Astrocyte of the cerebellum (primary cell): ENCODE measurements at regions of chr2 and their contacts with region 1.

Region 1: GRCh38 chr2:64273524-64274398 is 129.5 kb upstream of the PELI1 start:
- DNase-seq: peak; percentile 83
- H3K4me3 ChIP-seq: no peak overlapping the region
- CTCF ChIP-seq: no peak

Region 2: DNA sequence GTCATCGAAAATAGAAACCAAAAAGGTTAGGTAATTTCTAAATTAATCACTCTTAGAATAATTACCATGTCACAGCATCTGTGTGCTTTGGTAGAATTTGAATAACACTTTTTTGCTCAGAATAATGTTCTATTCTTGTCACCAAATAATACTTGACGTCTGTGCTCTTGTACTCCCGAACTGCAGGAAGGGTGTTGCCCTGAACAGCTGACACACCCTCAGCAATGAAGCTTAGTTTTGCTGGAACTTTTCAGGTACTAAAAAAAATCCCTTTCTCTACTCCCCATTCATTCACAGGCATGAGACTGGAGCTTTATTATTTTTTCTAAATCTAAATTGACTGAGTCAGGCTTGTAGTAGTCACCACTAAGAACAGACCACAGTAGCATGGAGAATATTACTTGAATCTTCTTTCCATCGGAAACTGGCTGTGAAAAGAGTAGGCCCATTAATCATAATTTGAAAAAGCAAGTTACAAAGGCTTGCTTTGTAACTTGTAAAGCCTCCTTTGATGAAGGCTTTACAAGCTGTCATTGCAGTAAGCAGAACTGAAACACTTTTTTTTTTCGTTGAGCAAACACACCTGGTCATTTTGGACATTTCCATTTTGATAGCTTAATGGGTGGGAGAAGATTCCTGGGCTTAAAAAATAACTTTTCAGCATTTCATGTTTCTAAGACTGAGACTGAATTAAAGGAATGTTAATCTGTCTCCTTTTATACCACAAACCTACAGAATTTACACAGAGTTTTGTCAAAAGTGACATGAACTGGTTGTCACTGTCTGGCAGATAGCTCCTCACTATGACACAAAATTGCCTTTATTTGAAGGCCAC is 59.3 kb before region 1 on chr2:
- in situ Hi-C with region 1: loop called (anchors 5 kb)
- DNase-seq: no peak
- H3K4me3 ChIP-seq: no peak overlapping the region
- CTCF ChIP-seq: no peak

Region 3: GRCh38 chr2:64362562-64363026 is 88.8 kb after region 1 on chr2:
- in situ Hi-C with region 1: no loop called
- DNase-seq: no peak
- H3K4me3 ChIP-seq: no peak overlapping the region
- CTCF ChIP-seq: no peak